Sigmoid colon (tissue), 7 donors: ENCODE measurements at regions of chr3 and their contacts with region 1.

Region 1: GRCh38 chr3:98039322-98040024 is 4.4 kb upstream of the GABRR3 start:
- DNase-seq: no peak
- H3K4me3 ChIP-seq: peak overlapping the region in 2 of 4 donors; percentile 26 to 28
- H3K27ac ChIP-seq: no peak overlapping the region
- H3K4me1 ChIP-seq: no peaks in the 10 kb centered on the region
- H3K27me3 ChIP-seq: peaks cover 0 to 6% (median 0%) of the 10 kb centered on the region in 3 donors
- CTCF ChIP-seq: peak; percentile 52 to 87 (median 79)
- EP300 ChIP-seq: no peak
- POLR2A ChIP-seq: no peak

Region 2: DNA sequence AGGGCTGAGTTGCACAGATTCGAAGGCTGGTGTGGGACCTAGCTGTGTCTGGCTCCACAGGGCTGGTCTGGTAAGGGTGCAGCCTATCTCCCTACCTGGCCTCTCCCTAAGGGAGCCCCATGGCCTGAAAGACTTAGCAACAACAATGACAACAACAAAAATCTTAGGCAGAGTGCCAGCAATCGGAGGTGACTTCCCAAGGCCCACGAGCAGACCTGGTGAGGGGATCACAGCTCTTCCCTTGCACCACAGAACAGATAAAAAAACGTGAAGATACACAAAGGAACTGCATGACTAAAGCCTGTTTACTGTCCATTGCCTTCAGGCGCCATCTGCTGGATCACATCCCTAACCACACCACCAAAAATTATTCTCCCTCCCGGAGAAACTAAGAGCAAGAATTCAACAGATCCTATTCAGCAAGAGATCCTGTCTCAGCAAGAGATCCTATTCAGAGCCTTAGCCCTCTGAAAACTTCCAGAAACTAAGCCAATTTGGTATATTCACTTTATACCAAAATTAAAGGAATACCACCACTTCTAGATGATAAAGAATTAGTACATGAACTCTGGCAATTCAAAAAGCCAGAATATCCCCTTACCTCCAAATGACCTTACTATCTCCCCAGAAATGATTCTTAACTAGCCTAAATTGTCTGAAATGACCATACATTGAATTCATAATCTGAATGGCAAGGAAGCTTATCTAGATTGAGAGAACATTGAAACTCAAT is 290.1 kb after region 1 on chr3:
- intact Hi-C with region 1: loop called (anchors 2 kb)
- DNase-seq: no peak
- H3K4me3 ChIP-seq: no peak overlapping the region
- H3K27ac ChIP-seq: no peak overlapping the region
- H3K4me1 ChIP-seq: no peaks in the 10 kb centered on the region
- H3K27me3 ChIP-seq: peaks cover 0 to 3% (median 0%) of the 10 kb centered on the region in 3 donors
- CTCF ChIP-seq: peak; percentile 18 to 49 (median 34)
- EP300 ChIP-seq: no peak
- POLR2A ChIP-seq: no peak